ENCODE measurements at regions of chr11 and their contacts with region 1.

Region 1: GRCh38 chr11:120210626-120211521 is at the start of gene OAF:
- H3K4me3 Mint-ChIP-seq: peak within 1 kb of the TSS; percentile 94
- H3K27ac Mint-ChIP-seq: peak within 1 kb of the TSS; percentile 84
- H3K4me1 Mint-ChIP-seq: peaks cover 65% of the 10 kb centered on the region
- H3K27me3 Mint-ChIP-seq: peaks cover 23% of the 10 kb centered on the region

Region 2: DNA sequence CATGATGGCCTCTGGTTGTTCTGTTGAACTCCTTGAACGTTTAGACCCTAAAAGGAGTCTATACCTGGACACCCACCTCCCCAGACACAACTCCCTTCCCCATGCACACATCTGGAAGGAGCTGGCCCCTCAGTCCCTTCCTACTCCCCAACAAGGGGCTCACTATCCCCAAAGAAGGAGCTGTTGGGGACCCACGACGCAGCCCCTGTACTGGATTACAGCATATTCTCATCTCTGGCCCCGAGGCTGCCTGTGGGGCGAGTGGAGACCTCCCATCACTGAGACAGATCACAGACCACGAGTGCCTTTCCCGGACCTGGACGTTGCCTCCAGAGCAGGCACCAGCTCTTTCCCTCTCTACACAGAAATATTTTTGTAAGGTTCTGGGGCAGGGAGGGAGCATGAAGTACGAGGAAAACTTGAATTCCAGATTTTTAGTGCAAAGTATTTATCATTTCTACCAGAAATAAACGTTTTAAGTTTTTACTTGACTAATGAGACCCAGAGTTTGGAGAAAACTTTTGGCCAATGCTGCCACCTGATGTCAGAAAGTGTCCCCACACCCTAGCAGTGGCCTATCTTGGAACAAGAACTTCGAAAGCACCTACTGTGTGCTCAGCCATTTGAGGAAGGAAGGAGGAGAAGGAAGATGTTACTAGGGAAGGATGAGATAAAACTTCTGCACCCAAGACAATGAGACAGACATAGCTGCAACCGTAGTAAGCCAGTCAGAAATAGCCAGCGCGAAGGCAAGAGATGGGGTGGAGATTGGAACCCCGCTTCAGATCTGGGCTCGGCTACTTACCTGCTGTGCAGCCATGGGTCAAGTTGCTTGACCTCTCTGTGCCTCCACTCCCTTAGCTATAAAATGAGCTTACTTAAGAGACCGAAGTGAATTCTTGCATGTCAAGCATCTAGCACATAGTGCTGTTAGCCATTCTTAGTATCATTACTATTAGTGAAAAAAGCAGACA is 18.9 kb after region 1 on chr11:
- intact Hi-C with region 1: loop called (anchors 1 kb)
- H3K4me3 Mint-ChIP-seq: no peak overlapping the region
- H3K27ac Mint-ChIP-seq: no peak overlapping the region
- H3K4me1 Mint-ChIP-seq: peaks cover 39% of the 10 kb centered on the region
- H3K27me3 Mint-ChIP-seq: peaks cover 37% of the 10 kb centered on the region

Measured in dendritic cell treated with granulocyte-macrophage colony-stimulating factor and Interleukin-4, amounts not matched to agents 40 ng/mL and 50 ng/mL, for 4 days (primary cell).